ENCODE measurements at regions of chr15 and their contacts with region 1.

Region 1: DNA sequence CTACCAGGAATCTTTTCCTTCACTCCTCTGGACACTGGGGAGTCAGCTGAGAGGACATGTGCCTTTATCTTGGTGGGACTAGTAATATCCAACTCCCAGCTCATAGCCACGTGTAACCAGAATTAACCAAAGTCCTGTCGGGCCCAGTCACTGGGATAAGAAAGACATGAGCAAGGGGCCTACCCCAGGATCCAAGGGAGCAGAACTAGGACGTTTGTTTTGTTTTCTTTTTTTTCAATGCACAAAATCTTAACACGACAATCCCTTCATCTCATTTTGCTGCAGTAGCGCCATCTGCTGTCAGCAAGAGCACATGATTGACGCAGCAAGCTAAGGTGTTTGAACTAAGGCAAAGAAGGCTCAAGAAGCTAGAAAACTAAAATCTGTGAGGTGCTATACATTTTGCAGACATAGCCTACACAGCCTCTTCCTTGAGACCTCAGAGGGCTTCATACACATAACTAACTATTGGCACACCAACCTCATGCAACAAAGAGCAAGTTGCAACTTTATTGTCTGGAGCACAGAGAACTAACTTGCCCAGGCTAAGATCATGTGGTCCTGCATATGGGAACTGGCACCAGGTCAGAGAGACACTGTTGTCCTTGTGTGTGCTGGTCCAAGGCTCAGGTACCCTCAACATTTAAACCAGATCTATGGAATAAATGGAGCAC is 43.6 kb downstream of the RLBP1 start:
- DNase-seq: peak; percentile 56 to 78 (median 66)
- ATAC-seq: peak; percentile 28 to 34
- H3K4me3 ChIP-seq: no peak overlapping the region
- H3K27ac ChIP-seq: peak overlapping the region; percentile 3
- H3K4me1 ChIP-seq: peaks cover 8% of the 10 kb centered on the region
- H3K27me3 ChIP-seq: no peaks in the 10 kb centered on the region

Region 2: GRCh38 chr15:89057504-89058133 is 120.2 kb before region 1 on chr15:
- intact Hi-C with region 1: loop called (anchors 2 to 5 kb)
- DNase-seq: peak; percentile 76 to 93 (median 92)
- ATAC-seq: peak; percentile 86 to 91
- H3K4me3 ChIP-seq: no peak overlapping the region
- H3K27ac ChIP-seq: no peak overlapping the region
- H3K4me1 ChIP-seq: no peaks in the 10 kb centered on the region
- H3K27me3 ChIP-seq: no peaks in the 10 kb centered on the region

Region 3: GRCh38 chr15:89395996-89396395 is 218.2 kb after region 1 on chr15:
- intact Hi-C with region 1: no loop called
- DNase-seq: no peak
- ATAC-seq: no peak
- H3K4me3 ChIP-seq: no peak overlapping the region
- H3K27ac ChIP-seq: no peak overlapping the region
- H3K4me1 ChIP-seq: no peaks in the 10 kb centered on the region
- H3K27me3 ChIP-seq: peaks cover 3% of the 10 kb centered on the region

Measured in right cardiac atrium (tissue), 5 donors.